Activated CD4-positive, alpha-beta memory T cell treated with anti-CD3 and anti-CD28 coated beads for 36 hours (primary cell): ENCODE measurements at regions of chr17 and their contacts with region 1.

Region 1: GRCh38 chr17:36148559-36149295 is 27.7 kb downstream of the TBC1D3B start:
- DNase-seq: peak; percentile 85
- H3K4me3 Mint-ChIP-seq: no peak overlapping the region
- H3K27ac Mint-ChIP-seq: no peak overlapping the region
- H3K4me1 Mint-ChIP-seq: peaks cover 2% of the 10 kb centered on the region
- H3K27me3 Mint-ChIP-seq: peaks cover 24% of the 10 kb centered on the region

Region 2: GRCh38 chr17:35953720-35954119 is 195.0 kb before region 1 on chr17:
- CTCF ChIA-PET with region 1: interaction called, 10 read pairs
- POLR2A ChIA-PET with region 1: no interaction called
- intact Hi-C with region 1: no loop called
- DNase-seq: no peak
- H3K4me3 Mint-ChIP-seq: no peak overlapping the region
- H3K27ac Mint-ChIP-seq: no peak overlapping the region
- H3K4me1 Mint-ChIP-seq: no peaks in the 10 kb centered on the region
- H3K27me3 Mint-ChIP-seq: peaks cover 7% of the 10 kb centered on the region

Region 3: GRCh38 chr17:35981908-35982330 is 166.8 kb before region 1 on chr17:
- CTCF ChIA-PET with region 1: interaction called, 34 read pairs
- POLR2A ChIA-PET with region 1: no interaction called
- intact Hi-C with region 1: no loop called
- DNase-seq: peak; percentile 20
- H3K4me3 Mint-ChIP-seq: no peak overlapping the region
- H3K27ac Mint-ChIP-seq: no peak overlapping the region
- H3K4me1 Mint-ChIP-seq: no peaks in the 10 kb centered on the region
- H3K27me3 Mint-ChIP-seq: peaks cover 5% of the 10 kb centered on the region

Region 4: DNA sequence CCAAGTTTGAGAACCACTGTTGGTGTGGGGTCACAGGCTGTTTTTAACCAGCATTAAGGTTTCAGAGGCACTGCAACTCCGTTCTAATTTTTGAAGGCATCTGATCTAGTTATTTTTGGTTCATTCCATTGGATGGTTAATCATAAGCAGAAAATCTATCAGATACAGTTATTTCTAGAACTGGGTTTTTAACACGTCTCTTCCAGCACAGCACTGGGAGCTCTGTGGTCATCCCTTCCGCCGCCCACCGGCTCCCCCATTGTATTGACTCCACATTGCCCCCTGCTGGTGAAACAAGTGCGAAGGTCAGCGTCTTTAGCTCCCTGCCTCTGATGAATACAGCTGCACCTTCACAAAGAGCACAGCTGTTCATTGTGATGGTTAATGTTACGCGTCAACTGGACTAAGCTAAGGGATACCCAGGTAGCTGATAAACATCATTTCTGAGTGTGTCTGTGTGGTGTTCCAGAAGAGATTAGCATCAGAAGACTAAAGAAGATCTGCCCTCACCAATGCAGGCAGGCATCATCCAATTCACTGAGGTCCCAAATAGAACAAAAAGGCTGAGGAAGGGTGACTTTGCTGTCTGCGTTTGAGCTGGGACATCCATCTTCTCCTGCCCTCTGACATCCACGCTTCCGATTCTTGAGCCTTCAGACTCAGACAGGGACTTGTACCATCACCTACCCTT is 76.2 kb before region 1 on chr17:
- CTCF ChIA-PET with region 1: interaction called, 82 read pairs
- POLR2A ChIA-PET with region 1: no interaction called
- intact Hi-C with region 1: loop called (anchors 2 kb)
- DNase-seq: peak; percentile 90
- H3K4me3 Mint-ChIP-seq: no peak overlapping the region
- H3K27ac Mint-ChIP-seq: peak overlapping the region; percentile 24
- H3K4me1 Mint-ChIP-seq: peaks cover 28% of the 10 kb centered on the region
- H3K27me3 Mint-ChIP-seq: peaks cover 7% of the 10 kb centered on the region

Region 5: DNA sequence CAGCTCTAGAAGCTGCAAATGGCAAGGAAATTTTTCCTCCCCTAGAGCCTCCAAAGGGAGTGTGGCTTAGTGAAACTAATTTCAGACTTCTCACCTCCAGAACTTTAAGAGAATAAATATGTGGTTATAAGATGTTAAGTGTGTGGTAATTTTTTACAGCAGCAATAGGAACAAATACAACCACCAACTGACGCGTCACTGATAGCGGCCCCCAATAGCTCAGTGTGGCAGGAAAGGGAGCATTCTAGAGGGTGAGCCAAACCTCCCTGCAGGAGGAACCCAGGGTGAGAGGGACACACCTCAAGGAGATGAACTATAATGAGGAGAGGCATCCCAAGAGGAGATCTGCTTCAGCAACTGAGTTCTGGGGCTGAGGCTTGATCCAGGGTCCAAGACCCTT is 41.1 kb before region 1 on chr17:
- CTCF ChIA-PET with region 1: interaction called, 16 read pairs
- POLR2A ChIA-PET with region 1: no interaction called
- intact Hi-C with region 1: no loop called
- DNase-seq: no peak
- H3K4me3 Mint-ChIP-seq: no peak overlapping the region
- H3K27ac Mint-ChIP-seq: no peak overlapping the region
- H3K4me1 Mint-ChIP-seq: peaks cover 16% of the 10 kb centered on the region
- H3K27me3 Mint-ChIP-seq: peaks cover 19% of the 10 kb centered on the region

Region 6: GRCh38 chr17:36124879-36125824 is 23.6 kb before region 1 on chr17:
- CTCF ChIA-PET with region 1: interaction called, 68 read pairs
- POLR2A ChIA-PET with region 1: interaction called, 3 read pairs
- intact Hi-C with region 1: no loop called
- DNase-seq: no peak
- H3K4me3 Mint-ChIP-seq: no peak overlapping the region
- H3K27ac Mint-ChIP-seq: no peak overlapping the region
- H3K4me1 Mint-ChIP-seq: peaks cover 10% of the 10 kb centered on the region
- H3K27me3 Mint-ChIP-seq: peaks cover 25% of the 10 kb centered on the region

Region 7: GRCh38 chr17:36183001-36183971 is 34.6 kb after region 1 on chr17:
- CTCF ChIA-PET with region 1: no interaction called
- POLR2A ChIA-PET with region 1: no interaction called
- intact Hi-C with region 1: no loop called
- DNase-seq: peak; percentile 30
- H3K4me3 Mint-ChIP-seq: peak overlapping the region; percentile 24
- H3K27ac Mint-ChIP-seq: no peak overlapping the region
- H3K4me1 Mint-ChIP-seq: peaks cover 4% of the 10 kb centered on the region
- H3K27me3 Mint-ChIP-seq: peaks cover 59% of the 10 kb centered on the region

Region 8: GRCh38 chr17:36486204-36487194 is 337.8 kb after region 1 on chr17 and contains the start of gene ZNHIT3:
- CTCF ChIA-PET with region 1: interaction called, 18 read pairs
- POLR2A ChIA-PET with region 1: no interaction called
- intact Hi-C with region 1: no loop called
- DNase-seq: peak; percentile 96
- H3K4me3 Mint-ChIP-seq: peak within 1 kb of the TSS; percentile 94
- H3K27ac Mint-ChIP-seq: peak within 1 kb of the TSS; percentile 93
- H3K4me1 Mint-ChIP-seq: peaks cover 48% of the 10 kb centered on the region
- H3K27me3 Mint-ChIP-seq: peaks cover 13% of the 10 kb centered on the region
- total RNA-seq, gene ZNHIT3: 41.6 to 45.2 TPM